RWPE1 (cell line): ENCODE measurements at regions of chr1 and their contacts with region 1.

Region 1: GRCh38 chr1:207963427-207964194 is 52.7 kb upstream of the CD34 start:
- DNase-seq: peak; percentile 93
- H3K27ac ChIP-seq: peak overlapping the region; percentile 60
- CTCF ChIP-seq: peak; percentile 98

Region 2: DNA sequence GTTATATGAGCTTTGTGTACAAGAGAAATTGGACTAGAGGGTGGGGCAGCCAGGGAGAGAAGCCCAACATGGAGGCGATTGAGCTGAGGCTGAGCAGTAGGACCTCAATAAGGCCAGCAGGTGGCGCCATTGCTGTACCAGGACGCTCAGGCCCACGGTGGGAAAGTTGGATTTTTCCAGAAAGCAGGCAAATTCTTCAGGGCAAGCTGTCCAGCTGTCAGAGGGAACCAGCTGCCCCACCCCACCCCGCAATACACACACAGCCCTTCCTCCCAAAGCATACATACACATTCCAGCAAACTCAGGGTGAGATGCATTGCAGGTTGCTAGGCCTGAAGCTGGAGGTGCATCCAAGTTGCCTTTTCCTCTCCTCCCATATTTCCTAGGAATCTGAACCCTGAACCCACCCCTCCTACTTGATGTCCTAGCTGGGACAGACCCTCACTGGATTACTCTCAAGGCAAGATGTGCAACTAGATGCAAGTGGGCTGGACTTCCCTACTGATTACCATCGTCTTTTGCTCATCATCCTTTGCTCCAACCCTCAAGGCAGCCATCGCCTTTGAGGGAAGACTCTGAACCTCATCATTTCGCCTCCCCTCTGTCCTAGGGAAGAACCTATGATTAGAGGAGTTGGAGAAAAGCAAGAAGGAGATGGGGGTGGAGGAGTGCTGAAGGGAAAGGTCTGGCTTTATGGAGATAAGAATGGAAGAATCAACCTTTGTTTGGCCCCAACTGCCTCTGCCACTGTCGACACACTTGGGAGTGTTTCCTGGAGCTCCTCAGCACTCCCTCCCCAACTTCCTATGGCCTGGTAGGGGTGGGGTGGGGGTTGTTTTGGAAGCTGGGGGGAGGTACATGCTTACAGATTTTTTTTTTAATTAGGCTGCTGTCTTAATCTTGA is 78.2 kb before region 1 on chr1:
- CTCF ChIA-PET with region 1: interaction called, 30 read pairs
- POLR2A ChIA-PET with region 1: no interaction called
- DNase-seq: peak; percentile 79
- H3K27ac ChIP-seq: no peak overlapping the region
- CTCF ChIP-seq: peak; percentile 87

Region 3: GRCh38 chr1:207897188-207897587 is 66.4 kb before region 1 on chr1:
- CTCF ChIA-PET with region 1: interaction called, 21 read pairs
- POLR2A ChIA-PET with region 1: no interaction called
- DNase-seq: no peak
- H3K27ac ChIP-seq: no peak overlapping the region
- CTCF ChIP-seq: no peak

Region 4: DNA sequence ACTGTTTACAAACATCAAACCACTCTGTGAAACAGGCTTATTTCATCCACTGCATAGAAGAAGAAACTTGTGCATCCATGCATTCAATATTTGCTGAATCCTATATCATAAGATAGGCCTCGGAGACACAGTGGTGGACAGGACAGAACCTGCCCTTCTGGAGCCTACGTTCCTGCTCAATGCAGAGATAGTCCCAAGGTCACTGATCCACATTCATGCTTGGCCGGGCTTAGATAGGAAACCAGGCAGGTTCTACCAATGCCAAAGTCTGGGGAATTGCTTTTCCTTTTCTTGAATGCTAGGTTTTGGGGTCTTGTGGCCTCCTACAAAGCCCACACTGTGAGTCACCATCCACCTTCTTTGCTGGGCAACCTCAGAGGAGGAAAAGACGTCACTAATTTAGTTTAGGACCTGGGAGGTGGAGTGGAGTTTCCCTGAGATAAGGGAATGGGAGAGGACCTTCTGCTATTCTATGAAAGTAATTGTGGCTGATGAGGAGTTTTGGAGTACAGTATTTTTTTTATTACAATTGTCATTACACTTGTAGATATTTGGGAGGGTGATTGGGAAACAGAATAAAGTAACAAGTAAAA is 47.0 kb after region 1 on chr1:
- CTCF ChIA-PET with region 1: no interaction called
- POLR2A ChIA-PET with region 1: no interaction called
- DNase-seq: no peak
- H3K27ac ChIP-seq: no peak overlapping the region
- CTCF ChIP-seq: no peak